ENCODE measurements at regions of chr17 and their contacts with region 1.

Region 1: GRCh38 chr17:3865176-3865575 is 19.1 kb upstream of the NCBP3 start:
- DNase-seq: no peak
- ATAC-seq: no peak
- H3K4me3 ChIP-seq: no peak overlapping the region
- H3K4me3 Mint-ChIP-seq: no peak overlapping the region
- H3K27ac ChIP-seq: no peak overlapping the region
- H3K27ac Mint-ChIP-seq: peak overlapping the region in 1 of 9 donors; percentile 30
- H3K4me1 ChIP-seq: no peaks in the 10 kb centered on the region
- H3K4me1 Mint-ChIP-seq: peaks cover 0 to 2% (median 0%) of the 10 kb centered on the region in 7 donors
- H3K27me3 ChIP-seq: no peaks in the 10 kb centered on the region
- H3K27me3 Mint-ChIP-seq: no peaks in the 10 kb centered on the region

Region 2: GRCh38 chr17:3893003-3893719 is 28.0 kb after region 1 on chr17 and contains the start of gene CAMKK1:
- CTCF ChIA-PET with region 1: no interaction called
- POLR2A ChIA-PET with region 1: no interaction called
- intact Hi-C with region 1: loop called in 1 of 2 experiments (anchors 1 kb)
- DNase-seq: peak; percentile 71 to 96 (median 85)
- ATAC-seq: peak; percentile 87
- H3K4me3 ChIP-seq: peak within 1 kb of the TSS; percentile 70
- H3K4me3 Mint-ChIP-seq: peak within 1 kb of the TSS; percentile 81 to 90 (median 86)
- H3K27ac ChIP-seq: peak within 1 kb of the TSS; percentile 77
- H3K27ac Mint-ChIP-seq: peak within 1 kb of the TSS; percentile 73 to 93 (median 88)
- H3K4me1 ChIP-seq: peaks cover 11 to 23% of the 10 kb centered on the region in 2 donors
- H3K4me1 Mint-ChIP-seq: peaks cover 23 to 45% (median 35%) of the 10 kb centered on the region in 7 donors
- H3K27me3 ChIP-seq: no peaks in the 10 kb centered on the region
- H3K27me3 Mint-ChIP-seq: peaks cover 0 to 7% (median 0%) of the 10 kb centered on the region in 5 donors
- total RNA-seq, gene CAMKK1: 4.8 to 12.5 (median 6.3) TPM

Region 3: GRCh38 chr17:3907483-3908216 is 42.5 kb after region 1 on chr17:
- CTCF ChIA-PET with region 1: no interaction called
- POLR2A ChIA-PET with region 1: no interaction called
- intact Hi-C with region 1: loop called (anchors 1 to 5 kb)
- DNase-seq: no peak
- ATAC-seq: no peak
- H3K4me3 ChIP-seq: no peak overlapping the region
- H3K4me3 Mint-ChIP-seq: no peak overlapping the region
- H3K27ac ChIP-seq: no peak overlapping the region
- H3K27ac Mint-ChIP-seq: peak overlapping the region in 3 of 9 donors; percentile 56 to 84 (median 66)
- H3K4me1 ChIP-seq: peaks cover 4 to 7% of the 10 kb centered on the region in 2 donors
- H3K4me1 Mint-ChIP-seq: peaks cover 10 to 24% (median 17%) of the 10 kb centered on the region in 7 donors
- H3K27me3 ChIP-seq: no peaks in the 10 kb centered on the region
- H3K27me3 Mint-ChIP-seq: no peaks in the 10 kb centered on the region

Region 4: GRCh38 chr17:3913531-3914311 is 48.5 kb after region 1 on chr17:
- CTCF ChIA-PET with region 1: interaction called, 4 read pairs
- POLR2A ChIA-PET with region 1: no interaction called
- intact Hi-C with region 1: loop called (anchors 1 to 5 kb)
- DNase-seq: peak; percentile 65 to 85 (median 76)
- ATAC-seq: peak; percentile 78
- H3K4me3 ChIP-seq: no peak overlapping the region
- H3K4me3 Mint-ChIP-seq: peak overlapping the region in 2 of 10 donors; percentile 23 to 77
- H3K27ac ChIP-seq: no peak overlapping the region
- H3K27ac Mint-ChIP-seq: peak overlapping the region; percentile 31 to 86 (median 76)
- H3K4me1 ChIP-seq: peaks cover 27 to 38% of the 10 kb centered on the region in 2 donors
- H3K4me1 Mint-ChIP-seq: peaks cover 26 to 64% (median 47%) of the 10 kb centered on the region in 7 donors
- H3K27me3 ChIP-seq: no peaks in the 10 kb centered on the region
- H3K27me3 Mint-ChIP-seq: no peaks in the 10 kb centered on the region

Region 5: GRCh38 chr17:4004517-4005295 is 139.5 kb after region 1 on chr17:
- CTCF ChIA-PET with region 1: interaction called, 6 read pairs
- POLR2A ChIA-PET with region 1: no interaction called
- intact Hi-C with region 1: loop called in 1 of 2 experiments (anchors 1 kb)
- DNase-seq: peak; percentile 32 to 80 (median 64)
- ATAC-seq: peak; percentile 68
- H3K4me3 ChIP-seq: no peak overlapping the region
- H3K4me3 Mint-ChIP-seq: no peak overlapping the region
- H3K27ac ChIP-seq: no peak overlapping the region
- H3K27ac Mint-ChIP-seq: peak overlapping the region in 2 of 9 donors; percentile 65
- H3K4me1 ChIP-seq: peaks cover 0 to 7% of the 10 kb centered on the region in 2 donors
- H3K4me1 Mint-ChIP-seq: peaks cover 4 to 17% (median 7%) of the 10 kb centered on the region in 7 donors
- H3K27me3 ChIP-seq: no peaks in the 10 kb centered on the region
- H3K27me3 Mint-ChIP-seq: no peaks in the 10 kb centered on the region

Region 6: DNA sequence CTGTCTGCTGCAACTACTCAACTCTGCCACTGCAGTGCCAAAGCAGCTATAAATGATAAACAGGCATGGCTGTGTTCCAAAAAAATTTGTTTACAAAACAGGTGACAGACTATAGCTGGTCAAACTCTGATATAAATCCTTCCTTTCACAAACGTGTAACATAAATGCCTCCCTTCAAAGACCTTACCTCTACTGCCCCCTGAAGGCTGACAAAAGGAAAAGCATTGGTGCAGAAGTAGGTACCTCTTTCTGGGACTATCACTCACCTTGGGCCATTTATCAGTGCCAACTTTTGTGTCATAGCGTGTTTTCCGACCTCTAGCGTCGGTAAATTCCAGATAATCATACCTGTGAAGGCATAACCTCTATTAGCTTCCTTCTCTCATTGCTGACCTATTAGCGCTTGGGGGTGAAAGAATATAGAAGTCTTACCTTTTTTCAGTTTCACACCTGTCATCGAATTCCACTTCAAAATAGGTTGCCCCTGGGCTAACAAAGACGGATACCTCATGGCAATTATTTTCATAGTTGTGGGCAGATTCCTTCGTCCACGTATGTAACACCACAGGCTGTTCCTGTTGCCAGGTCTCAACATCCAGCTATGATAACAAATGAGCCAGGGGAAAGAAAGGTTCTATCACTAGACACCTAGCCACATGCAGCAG is 209.8 kb after region 1 on chr17:
- CTCF ChIA-PET with region 1: interaction called, 5 read pairs
- POLR2A ChIA-PET with region 1: no interaction called
- intact Hi-C with region 1: loop called (anchors 1 to 5 kb)
- DNase-seq: peak in 7 of 9 donors; percentile 9 to 56 (median 42)
- ATAC-seq: peak; percentile 75
- H3K4me3 ChIP-seq: no peak overlapping the region
- H3K4me3 Mint-ChIP-seq: no peak overlapping the region
- H3K27ac ChIP-seq: no peak overlapping the region
- H3K27ac Mint-ChIP-seq: peak overlapping the region in 2 of 9 donors; percentile 39 to 41
- H3K4me1 ChIP-seq: no peaks in the 10 kb centered on the region
- H3K4me1 Mint-ChIP-seq: no peaks in the 10 kb centered on the region
- H3K27me3 ChIP-seq: no peaks in the 10 kb centered on the region
- H3K27me3 Mint-ChIP-seq: no peaks in the 10 kb centered on the region